MCF 10A (cell line): ENCODE measurements at regions of chr7 and their contacts with region 1.

Region 1: DNA sequence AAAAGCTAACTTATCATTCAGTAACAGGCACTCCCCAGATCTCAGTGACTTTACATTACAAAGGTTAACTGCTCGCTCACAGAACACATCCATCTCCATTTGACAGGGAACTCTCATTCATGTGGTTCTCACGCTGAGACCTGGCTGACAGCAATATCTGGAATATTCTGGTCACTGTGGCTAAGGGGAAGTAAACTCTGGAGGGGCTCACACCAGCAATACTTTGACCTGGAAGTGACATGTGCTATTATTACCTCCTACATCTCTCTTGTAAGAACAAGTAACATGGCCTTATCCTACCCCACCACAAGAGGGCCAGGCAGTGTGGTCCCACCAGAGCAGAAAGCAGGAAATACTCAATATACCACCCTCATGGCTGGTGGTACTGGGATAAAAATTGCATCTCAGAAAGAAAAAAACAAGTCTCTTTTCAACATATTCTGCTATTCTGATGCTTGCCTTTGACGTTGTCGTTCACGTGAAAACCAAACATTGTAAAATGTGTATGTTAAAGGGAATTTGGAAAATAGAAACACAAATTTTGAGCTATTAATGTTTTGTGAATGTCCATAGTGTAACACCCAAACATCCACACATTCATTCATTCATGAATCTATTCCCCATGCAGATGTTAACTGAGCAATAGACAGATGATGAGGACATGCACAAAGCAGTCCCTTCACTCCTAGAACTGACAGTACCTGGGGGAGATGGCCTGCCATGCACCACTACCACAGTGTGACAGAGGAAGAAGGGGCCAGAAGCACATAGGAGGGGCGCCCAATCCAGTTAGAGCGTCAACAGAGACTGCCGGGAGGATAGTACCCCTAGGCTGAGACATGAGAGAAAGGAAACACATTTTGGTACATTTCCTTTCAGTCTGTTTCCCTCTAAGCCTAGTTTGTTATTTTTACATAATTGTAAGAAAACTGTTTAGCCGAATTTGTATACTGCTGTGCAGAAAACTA is 166.0 kb upstream of the SP4 start:
- DNase-seq: peak; percentile 45
- H3K4me3 Mint-ChIP-seq: no peak overlapping the region
- H3K27ac Mint-ChIP-seq: no peak overlapping the region
- H3K4me1 Mint-ChIP-seq: no peaks in the 10 kb centered on the region
- H3K27me3 Mint-ChIP-seq: no peaks in the 10 kb centered on the region
- CTCF ChIP-seq: peak; percentile 48

Region 2: DNA sequence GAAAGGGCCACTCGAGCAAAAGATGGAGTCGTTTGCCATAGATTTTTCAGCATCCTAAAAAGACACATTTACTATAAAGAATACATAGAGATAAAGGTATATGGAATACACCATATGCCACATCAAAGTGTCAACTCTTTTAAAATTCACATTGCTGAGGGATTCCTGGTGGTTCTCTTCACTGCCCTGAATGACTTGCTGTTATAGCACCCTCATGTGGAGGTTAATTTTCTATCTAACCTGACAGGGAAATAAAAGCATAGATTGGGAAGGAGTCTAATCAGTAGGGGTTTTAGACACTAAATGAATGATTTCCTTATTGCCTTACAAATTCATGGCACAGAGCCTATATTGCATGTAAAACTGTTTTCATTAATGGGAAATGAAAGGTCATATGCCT is 306.9 kb after region 1 on chr7:
- CTCF ChIA-PET with region 1: interaction called, 14 read pairs
- POLR2A ChIA-PET with region 1: no interaction called
- intact Hi-C with region 1: loop called (anchors 2 kb)
- DNase-seq: peak; percentile 36
- H3K4me3 Mint-ChIP-seq: no peak overlapping the region
- H3K27ac Mint-ChIP-seq: peak overlapping the region; percentile 42
- H3K4me1 Mint-ChIP-seq: no peaks in the 10 kb centered on the region
- H3K27me3 Mint-ChIP-seq: no peaks in the 10 kb centered on the region
- CTCF ChIP-seq: peak; percentile 18